ENCODE measurements at regions of chr5 and their contacts with region 1.

Region 1: DNA sequence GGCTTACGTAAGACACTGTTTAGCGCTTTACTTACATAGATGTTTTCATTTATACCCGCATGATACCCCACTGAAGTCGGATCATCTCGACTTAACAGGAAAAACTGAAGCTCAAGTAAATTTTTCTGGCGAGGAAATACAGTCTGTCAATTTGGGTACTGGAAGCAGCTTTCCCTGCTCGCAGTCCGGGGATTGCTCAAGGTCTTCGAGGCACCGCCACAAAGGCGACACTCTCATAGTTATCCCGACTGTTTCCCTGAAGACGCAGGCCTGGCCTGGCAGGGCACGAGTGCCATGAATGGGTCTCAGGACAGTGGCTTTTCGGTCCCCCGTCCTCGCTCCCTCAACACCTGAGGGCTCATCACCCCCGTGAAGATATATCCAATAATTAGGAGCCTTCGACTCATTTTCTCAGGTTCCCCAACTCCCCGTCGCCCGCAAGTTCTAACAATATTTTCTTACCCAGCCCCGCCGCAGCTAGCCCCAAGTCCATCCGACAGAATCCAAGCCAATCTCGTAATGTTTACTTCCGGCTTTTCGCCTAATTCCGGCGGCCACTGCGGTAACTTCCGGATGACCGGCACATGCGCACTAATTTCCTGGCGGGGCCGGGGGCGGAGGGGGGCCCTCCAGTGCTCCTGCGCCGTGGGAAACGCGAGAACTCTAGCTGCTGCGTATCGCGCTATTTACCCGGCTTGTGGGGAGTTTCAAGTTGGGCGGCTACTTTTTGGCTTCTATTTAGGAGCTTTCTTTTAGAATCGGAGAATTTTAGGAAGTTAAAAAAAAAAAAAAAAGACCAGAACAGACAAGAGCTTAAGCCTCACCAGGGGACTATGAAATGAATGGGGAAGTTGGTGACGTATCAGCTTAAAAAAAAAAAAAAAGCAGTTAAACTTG is at the start of gene SLU7:
- DNase-seq: peak; percentile 88 to 96 (median 92)
- ATAC-seq: peak; percentile 79
- H3K4me3 ChIP-seq: peak within 1 kb of the TSS; percentile 59 to 95
- H3K4me3 Mint-ChIP-seq: peak within 1 kb of the TSS; percentile 95
- H3K27ac ChIP-seq: peak within 1 kb of the TSS; percentile 81 to 93
- H3K27ac Mint-ChIP-seq: peak within 1 kb of the TSS; percentile 98
- H3K4me1 ChIP-seq: peaks cover 32% of the 10 kb centered on the region
- H3K4me1 Mint-ChIP-seq: peaks cover 76% of the 10 kb centered on the region
- H3K27me3 ChIP-seq: no peaks in the 10 kb centered on the region
- H3K27me3 Mint-ChIP-seq: no peaks in the 10 kb centered on the region
- CTCF ChIP-seq: no peak
- total RNA-seq, gene SLU7: 127 to 136 TPM

Region 2: GRCh38 chr5:160008877-160009590 is 409.8 kb before region 1 on chr5 and contains the start of gene TTC1:
- CTCF ChIA-PET with region 1: no interaction called
- POLR2A ChIA-PET with region 1: interaction called, 4 read pairs
- intact Hi-C with region 1: loop called (anchors 2 to 5 kb)
- DNase-seq: peak; percentile 82 to 99 (median 93)
- ATAC-seq: peak; percentile 96
- H3K4me3 ChIP-seq: peak within 1 kb of the TSS; percentile 84 to 92
- H3K4me3 Mint-ChIP-seq: peak within 1 kb of the TSS; percentile 99
- H3K27ac ChIP-seq: peak within 1 kb of the TSS; percentile 86 to 89
- H3K27ac Mint-ChIP-seq: peak within 1 kb of the TSS; percentile 99
- H3K4me1 ChIP-seq: peaks cover 25% of the 10 kb centered on the region
- H3K4me1 Mint-ChIP-seq: peaks cover 31% of the 10 kb centered on the region
- H3K27me3 ChIP-seq: peaks cover 0 to 2% of the 10 kb centered on the region in 2 experiments
- H3K27me3 Mint-ChIP-seq: no peaks in the 10 kb centered on the region
- CTCF ChIP-seq: no peak
- total RNA-seq, gene TTC1: 12.6 to 14.3 TPM

Region 3: DNA sequence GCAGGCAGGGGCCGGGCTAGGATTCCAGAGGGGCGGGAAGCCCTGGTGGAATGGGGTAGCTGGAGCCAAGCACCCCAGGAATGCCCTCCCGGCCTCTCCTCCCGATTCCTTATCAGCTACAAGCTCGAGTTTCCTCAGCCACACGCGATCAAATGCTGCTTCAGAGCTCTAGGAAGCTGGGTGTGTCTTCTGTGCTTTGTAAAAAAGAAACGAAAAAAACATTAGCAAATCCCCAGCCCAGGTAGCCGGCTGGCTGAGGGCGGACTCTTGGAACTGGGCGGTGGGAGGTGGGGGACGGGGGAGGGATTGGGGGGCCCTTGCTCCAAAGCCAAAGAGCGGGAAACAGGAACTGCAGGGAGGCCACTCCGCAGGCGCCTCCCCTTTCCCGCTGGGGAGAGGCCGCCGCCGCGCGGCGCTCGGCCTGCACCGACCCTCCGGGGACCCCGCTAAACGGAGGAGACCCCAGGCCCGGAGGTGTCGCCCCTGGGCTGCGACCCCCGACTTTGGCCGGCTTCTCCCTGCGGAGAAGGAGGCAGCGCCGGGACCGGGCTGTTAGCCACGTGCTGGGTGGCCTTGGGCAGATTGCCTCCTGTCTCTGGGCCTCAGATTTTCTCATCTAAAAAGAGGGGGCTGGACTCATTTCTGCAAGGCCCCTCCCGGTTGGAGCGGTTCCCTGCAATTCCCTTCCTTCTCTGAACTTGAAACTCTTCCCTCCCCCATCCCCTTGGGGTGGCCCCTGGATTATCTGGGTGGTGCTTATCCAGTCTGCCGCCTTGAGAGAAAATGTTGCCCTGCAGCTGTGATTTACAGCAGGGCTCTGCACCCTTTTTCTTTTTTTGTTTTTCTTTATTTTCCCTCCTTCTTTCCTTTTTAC is 230.4 kb before region 1 on chr5:
- CTCF ChIA-PET with region 1: no interaction called
- POLR2A ChIA-PET with region 1: no interaction called
- intact Hi-C with region 1: no loop called
- DNase-seq: no peak
- ATAC-seq: no peak
- H3K4me3 ChIP-seq: no peak overlapping the region
- H3K4me3 Mint-ChIP-seq: peak overlapping the region; percentile 47
- H3K27ac ChIP-seq: no peak overlapping the region
- H3K27ac Mint-ChIP-seq: no peak overlapping the region
- H3K4me1 ChIP-seq: no peaks in the 10 kb centered on the region
- H3K4me1 Mint-ChIP-seq: peaks cover 6% of the 10 kb centered on the region
- H3K27me3 ChIP-seq: no peaks in the 10 kb centered on the region
- H3K27me3 Mint-ChIP-seq: peaks cover 35% of the 10 kb centered on the region
- CTCF ChIP-seq: no peak

Region 4: GRCh38 chr5:160399402-160400353 is 19.1 kb before region 1 on chr5 and contains the start of gene FAM200C:
- CTCF ChIA-PET with region 1: no interaction called
- POLR2A ChIA-PET with region 1: interaction called, 6 read pairs
- intact Hi-C with region 1: loop called in 1 of 2 experiments (anchors 2 kb)
- DNase-seq: peak; percentile 15 to 85 (median 57)
- ATAC-seq: peak; percentile 73
- H3K4me3 ChIP-seq: peak within 1 kb of the TSS; percentile 60 to 86
- H3K4me3 Mint-ChIP-seq: peak within 1 kb of the TSS; percentile 91
- H3K27ac ChIP-seq: peak within 1 kb of the TSS; percentile 27 to 54
- H3K27ac Mint-ChIP-seq: peak within 1 kb of the TSS; percentile 57
- H3K4me1 ChIP-seq: peaks cover 7% of the 10 kb centered on the region
- H3K4me1 Mint-ChIP-seq: peaks cover 18% of the 10 kb centered on the region
- H3K27me3 ChIP-seq: no peaks in the 10 kb centered on the region
- H3K27me3 Mint-ChIP-seq: no peaks in the 10 kb centered on the region
- CTCF ChIP-seq: no peak
- total RNA-seq, gene FAM200C: 0.14 TPM in 1 of 2 experiments, not detected in the other

Region 5: DNA sequence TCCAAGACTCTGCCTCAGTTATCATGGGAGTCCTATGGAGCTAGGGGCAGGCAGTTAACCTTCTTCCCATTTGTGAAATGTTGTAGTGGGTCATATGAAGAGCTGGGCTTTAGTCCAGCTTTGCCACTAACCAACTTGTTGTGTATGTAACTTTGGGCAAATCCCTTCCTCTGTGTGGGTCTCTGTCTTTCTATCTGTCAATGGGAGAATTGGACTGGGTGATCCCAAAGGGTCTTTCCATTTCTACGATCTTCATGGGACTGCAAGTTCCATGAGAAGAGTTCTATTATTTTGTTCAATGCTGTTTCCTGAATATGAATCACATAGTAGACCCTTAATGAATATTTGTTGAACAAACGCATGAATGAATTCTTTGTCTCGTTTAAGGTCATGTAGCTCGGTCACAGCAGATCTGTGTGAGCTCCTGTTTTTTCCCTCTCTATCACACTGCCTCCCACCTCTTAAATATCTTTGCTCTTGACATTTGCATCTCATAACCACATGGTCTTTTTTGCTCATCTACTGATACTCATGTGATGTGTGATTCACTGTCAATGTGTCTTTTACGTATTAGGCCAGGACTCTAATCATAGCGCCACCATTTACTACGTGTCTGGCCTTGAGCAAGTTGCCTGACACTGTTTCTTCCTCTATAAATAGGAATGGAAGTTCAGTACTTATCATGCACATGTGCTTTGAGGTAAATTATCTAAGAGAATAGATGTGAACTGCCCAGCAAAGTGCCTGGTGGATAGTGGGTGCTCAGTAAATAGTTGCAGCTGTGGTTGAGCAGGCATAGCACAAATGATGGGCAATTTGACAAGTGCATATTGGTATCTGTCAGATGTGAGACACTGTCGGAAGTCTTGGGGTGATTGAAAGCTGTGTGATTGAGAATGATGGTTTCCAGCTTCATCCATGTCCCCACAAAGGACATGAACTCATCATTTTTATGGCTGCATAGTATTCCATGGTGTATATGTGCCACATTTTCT is 40.3 kb after region 1 on chr5:
- CTCF ChIA-PET with region 1: no interaction called
- POLR2A ChIA-PET with region 1: no interaction called
- intact Hi-C with region 1: no loop called
- DNase-seq: no peak
- ATAC-seq: no peak
- H3K4me3 ChIP-seq: no peak overlapping the region
- H3K4me3 Mint-ChIP-seq: no peak overlapping the region
- H3K27ac ChIP-seq: no peak overlapping the region
- H3K27ac Mint-ChIP-seq: no peak overlapping the region
- H3K4me1 ChIP-seq: no peaks in the 10 kb centered on the region
- H3K4me1 Mint-ChIP-seq: peaks cover 4% of the 10 kb centered on the region
- H3K27me3 ChIP-seq: no peaks in the 10 kb centered on the region
- H3K27me3 Mint-ChIP-seq: peaks cover 13% of the 10 kb centered on the region
- CTCF ChIP-seq: no peak

Region 6: DNA sequence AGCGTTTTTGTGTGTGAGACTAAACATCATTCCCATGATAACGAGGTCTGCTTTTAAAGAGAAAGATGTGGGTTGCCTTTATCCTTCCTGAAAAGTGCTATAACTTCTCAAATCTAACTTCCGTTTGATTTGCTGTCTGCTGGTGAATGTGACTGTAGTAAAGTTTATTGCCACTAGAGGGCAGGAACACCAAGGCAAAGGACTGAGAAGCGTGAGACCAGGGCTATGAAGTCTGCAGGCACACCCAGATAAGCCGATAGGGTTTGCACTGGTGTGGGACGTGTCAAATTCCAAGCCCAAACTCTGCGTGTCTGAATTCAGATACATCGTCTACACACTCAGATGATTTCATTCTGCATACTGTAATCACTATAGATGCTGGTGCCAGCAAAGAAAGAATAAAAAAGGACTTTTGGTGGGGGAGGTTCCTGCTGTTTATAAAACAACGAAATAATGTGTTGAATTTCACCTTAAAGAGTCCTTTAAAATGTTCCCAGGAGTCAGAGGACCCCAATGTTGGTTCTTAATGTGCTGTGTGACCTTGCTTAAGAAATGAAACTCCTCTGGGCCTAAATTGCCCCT is 90.1 kb after region 1 on chr5:
- CTCF ChIA-PET with region 1: no interaction called
- POLR2A ChIA-PET with region 1: interaction called, 3 read pairs
- intact Hi-C with region 1: loop called in 1 of 2 experiments (anchors 5 kb)
- DNase-seq: peak; percentile 10 to 90 (median 59)
- ATAC-seq: peak; percentile 86
- H3K4me3 ChIP-seq: no peak overlapping the region
- H3K4me3 Mint-ChIP-seq: no peak overlapping the region
- H3K27ac ChIP-seq: peak overlapping the region in 1 of 2 experiments; percentile 1
- H3K27ac Mint-ChIP-seq: no peak overlapping the region
- H3K4me1 ChIP-seq: peaks cover 17% of the 10 kb centered on the region
- H3K4me1 Mint-ChIP-seq: peaks cover 26% of the 10 kb centered on the region
- H3K27me3 ChIP-seq: peaks cover 0 to 9% of the 10 kb centered on the region in 2 experiments
- H3K27me3 Mint-ChIP-seq: peaks cover 9% of the 10 kb centered on the region
- CTCF ChIP-seq: peak; percentile 82

Measured in CD8-positive, alpha-beta T cell (primary cell).